ENCODE measurements at regions of chr3 and their contacts with region 1.

Region 1: GRCh38 chr3:185659942-185660921 is 74.1 kb downstream of the SENP2 start:
- DNase-seq: peak; percentile 84
- H3K4me3 ChIP-seq: no peak overlapping the region
- H3K27ac ChIP-seq: peak overlapping the region; percentile 48
- H3K4me1 ChIP-seq: peaks cover 55% of the 10 kb centered on the region
- H3K27me3 ChIP-seq: no peaks in the 10 kb centered on the region
- CTCF ChIP-seq: peak; percentile 98 to 99
- POLR2A ChIP-seq: no peak

Region 2: DNA sequence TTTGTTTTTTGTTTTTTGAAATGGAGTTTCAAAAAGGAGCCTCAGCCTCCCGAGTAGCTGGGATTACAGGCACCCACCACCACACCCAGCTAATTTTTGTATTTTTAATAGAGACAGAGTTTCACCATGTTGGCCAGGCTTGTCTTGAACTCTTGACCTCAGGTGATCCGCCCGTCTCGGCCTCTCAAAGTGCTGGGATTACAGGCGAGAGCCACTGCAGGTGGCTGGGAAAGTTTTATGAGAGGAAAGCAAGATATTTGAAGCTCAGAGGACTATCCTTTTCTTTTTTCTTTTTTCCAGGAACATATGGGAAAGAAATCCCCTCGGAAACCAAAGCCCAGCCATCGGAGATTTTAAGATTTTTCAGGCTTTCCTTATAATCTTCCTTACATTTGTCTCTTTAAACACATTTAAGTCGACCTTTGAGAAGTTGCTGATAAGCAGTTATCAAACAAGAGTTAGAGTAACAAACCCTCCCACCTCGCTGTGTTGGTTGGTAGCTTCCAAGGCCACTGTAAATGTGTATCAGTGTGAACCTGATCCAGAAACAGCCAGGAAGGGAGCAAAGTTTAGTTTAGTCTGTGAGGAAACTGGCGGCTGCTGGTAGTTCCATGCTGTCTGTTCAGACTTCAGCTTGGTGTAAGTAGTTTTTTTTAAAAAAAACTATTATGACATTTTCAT is 331.8 kb before region 1 on chr3:
- CTCF ChIA-PET with region 1: no interaction called
- POLR2A ChIA-PET with region 1: no interaction called
- dilution Hi-C with region 1: no loop called
- intact Hi-C with region 1: no loop called
- DNase-seq: no peak
- H3K4me3 ChIP-seq: no peak overlapping the region
- H3K27ac ChIP-seq: no peak overlapping the region
- H3K4me1 ChIP-seq: peaks cover 3% of the 10 kb centered on the region
- H3K27me3 ChIP-seq: no peaks in the 10 kb centered on the region
- CTCF ChIP-seq: no peak
- POLR2A ChIP-seq: no peak

Region 3: GRCh38 chr3:185645596-185646381 is 14.4 kb before region 1 on chr3:
- CTCF ChIA-PET with region 1: interaction called, 12 read pairs
- POLR2A ChIA-PET with region 1: no interaction called
- dilution Hi-C with region 1: no loop called
- intact Hi-C with region 1: no loop called
- DNase-seq: no peak
- H3K4me3 ChIP-seq: no peak overlapping the region
- H3K27ac ChIP-seq: no peak overlapping the region
- H3K4me1 ChIP-seq: no peaks in the 10 kb centered on the region
- H3K27me3 ChIP-seq: no peaks in the 10 kb centered on the region
- CTCF ChIP-seq: no peak
- POLR2A ChIP-seq: no peak

Region 4: GRCh38 chr3:185702262-185703225 is 42.3 kb after region 1 on chr3:
- CTCF ChIA-PET with region 1: interaction called, 10 read pairs
- POLR2A ChIA-PET with region 1: no interaction called
- dilution Hi-C with region 1: no loop called
- intact Hi-C with region 1: no loop called
- DNase-seq: peak; percentile 62
- H3K4me3 ChIP-seq: peak overlapping the region in 1 of 3 experiments; percentile 16
- H3K27ac ChIP-seq: peak overlapping the region; percentile 49
- H3K4me1 ChIP-seq: peaks cover 41% of the 10 kb centered on the region
- H3K27me3 ChIP-seq: no peaks in the 10 kb centered on the region
- CTCF ChIP-seq: no peak
- POLR2A ChIP-seq: no peak

Region 5: DNA sequence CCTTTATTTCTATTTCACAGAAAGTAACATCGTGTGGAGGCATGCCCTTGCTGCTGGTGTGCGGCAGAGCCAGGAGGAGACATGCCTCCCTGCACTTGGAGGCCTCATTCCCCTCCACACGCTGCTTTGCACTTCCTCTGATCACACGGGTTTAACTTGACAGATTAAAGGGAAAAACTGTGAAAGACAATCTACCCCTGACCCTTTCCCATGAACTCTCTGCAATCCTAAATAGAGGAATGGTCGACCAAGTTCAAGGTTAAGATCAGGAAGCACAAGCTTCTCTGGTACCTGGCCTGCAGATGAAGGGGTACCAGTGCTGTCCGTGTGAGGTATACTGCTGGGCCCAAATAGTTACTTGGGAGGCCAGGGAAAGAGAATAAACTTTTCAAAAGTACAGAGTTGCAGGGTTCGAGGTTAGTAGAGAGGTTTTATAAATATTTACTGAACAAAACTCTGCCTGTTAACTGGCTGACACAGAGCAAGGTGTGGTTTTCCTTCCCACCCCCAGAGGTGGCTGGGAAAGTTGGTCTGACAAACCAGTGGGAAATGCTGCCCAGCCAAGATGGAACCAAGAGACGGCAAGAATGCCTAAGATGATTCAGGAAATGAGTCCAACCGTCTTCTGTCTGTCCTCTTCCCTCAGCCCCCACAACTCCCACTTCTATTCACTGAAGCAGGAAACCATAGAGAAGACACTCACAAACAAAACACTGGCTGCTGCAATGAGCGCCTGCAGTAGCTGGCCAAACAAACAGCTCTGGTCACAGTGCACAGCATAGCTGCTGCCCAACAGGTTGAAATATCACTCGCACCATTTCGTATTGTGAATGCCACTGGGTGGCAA is 85.0 kb after region 1 on chr3:
- CTCF ChIA-PET with region 1: interaction called, 16 read pairs
- POLR2A ChIA-PET with region 1: no interaction called
- dilution Hi-C with region 1: no loop called
- intact Hi-C with region 1: no loop called
- DNase-seq: peak; percentile 81
- H3K4me3 ChIP-seq: no peak overlapping the region
- H3K27ac ChIP-seq: peak overlapping the region; percentile 79
- H3K4me1 ChIP-seq: peaks cover 29% of the 10 kb centered on the region
- H3K27me3 ChIP-seq: no peaks in the 10 kb centered on the region
- CTCF ChIP-seq: no peak
- POLR2A ChIP-seq: peak; percentile 55

Region 6: GRCh38 chr3:185824476-185825378 is 164.5 kb after region 1 on chr3 and contains the start of gene IGF2BP2:
- CTCF ChIA-PET with region 1: interaction called, 46 read pairs
- POLR2A ChIA-PET with region 1: interaction called, 3 read pairs
- dilution Hi-C with region 1: no loop called
- intact Hi-C with region 1: loop called (anchors 1 kb)
- DNase-seq: peak; percentile 84
- H3K4me3 ChIP-seq: peak within 1 kb of the TSS; percentile 87 to 100 (median 98)
- H3K27ac ChIP-seq: peak within 1 kb of the TSS; percentile 84
- H3K4me1 ChIP-seq: peaks cover 32% of the 10 kb centered on the region
- H3K27me3 ChIP-seq: no peaks in the 10 kb centered on the region
- CTCF ChIP-seq: peak in 1 of 2 donors; percentile 11
- POLR2A ChIP-seq: peak; percentile 69
- total RNA-seq, gene IGF2BP2: 122 and 130 TPM in 2 replicates

Region 7: DNA sequence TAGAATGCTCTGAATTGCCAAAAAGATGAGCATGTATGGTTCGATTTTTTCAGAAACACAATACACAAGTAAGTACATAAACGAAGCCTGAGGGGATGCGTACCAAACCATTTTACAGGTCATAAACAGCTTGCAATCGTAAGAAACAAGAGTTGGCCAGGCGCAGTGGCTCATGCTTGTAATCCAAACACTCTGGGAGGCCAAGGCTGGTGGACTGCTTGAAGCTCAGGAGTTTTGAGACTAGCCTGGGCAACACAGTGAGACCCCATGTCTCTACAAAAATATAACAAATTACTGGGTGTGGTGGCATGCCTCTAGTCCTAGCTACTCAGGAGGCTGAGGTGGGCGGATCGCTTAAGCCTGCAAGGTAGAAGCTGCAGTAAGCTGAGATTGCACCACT is 264.1 kb after region 1 on chr3:
- CTCF ChIA-PET with region 1: interaction called, 78 read pairs
- POLR2A ChIA-PET with region 1: no interaction called
- dilution Hi-C with region 1: no loop called
- intact Hi-C with region 1: no loop called
- DNase-seq: no peak
- H3K4me3 ChIP-seq: no peak overlapping the region
- H3K27ac ChIP-seq: no peak overlapping the region
- H3K4me1 ChIP-seq: peaks cover 23% of the 10 kb centered on the region
- H3K27me3 ChIP-seq: no peaks in the 10 kb centered on the region
- CTCF ChIP-seq: no peak
- POLR2A ChIP-seq: no peak

Region 8: DNA sequence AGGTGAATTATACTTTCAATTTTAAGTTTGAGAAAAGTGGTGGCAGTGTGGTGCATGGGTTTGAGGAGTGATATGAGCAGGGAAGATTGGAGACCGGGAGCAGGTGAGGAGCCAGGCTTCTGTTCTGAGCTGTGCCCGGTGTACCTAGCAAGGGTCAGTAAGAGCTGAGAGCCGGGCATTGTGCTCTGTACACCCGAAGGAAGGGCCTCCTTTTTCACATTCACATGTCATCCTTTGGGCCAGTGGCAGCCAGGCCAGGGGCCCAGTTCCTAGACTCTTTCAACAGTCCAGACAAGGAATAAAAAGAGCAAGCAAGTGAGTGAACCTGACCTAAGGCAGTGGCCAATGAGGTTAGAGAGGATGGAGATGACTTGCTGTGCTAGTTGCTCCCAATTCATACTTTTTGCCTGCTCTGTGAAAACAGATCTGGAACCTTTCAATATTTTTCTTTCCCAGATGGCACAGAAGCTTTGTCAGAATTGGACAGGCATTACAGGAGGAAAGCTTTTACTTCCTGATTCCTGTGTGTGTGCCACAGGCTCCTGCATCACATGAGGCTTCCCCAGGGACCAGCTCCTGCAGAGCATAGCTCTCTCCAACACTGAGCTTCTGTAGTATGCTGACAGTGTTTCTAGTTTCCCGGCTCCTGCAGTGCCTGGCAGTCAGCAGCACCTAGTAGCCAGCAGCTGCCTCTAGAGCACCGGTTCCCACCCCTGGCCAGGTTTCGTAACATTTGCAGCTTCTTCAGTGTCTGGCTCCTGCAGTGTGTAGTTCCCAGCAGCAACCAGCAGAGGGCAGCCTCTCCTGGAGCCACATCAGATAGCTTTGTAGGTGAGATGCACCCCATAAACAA is 282.9 kb after region 1 on chr3:
- CTCF ChIA-PET with region 1: interaction called, 68 read pairs
- POLR2A ChIA-PET with region 1: interaction called, 5 read pairs
- dilution Hi-C with region 1: no loop called
- intact Hi-C with region 1: no loop called
- DNase-seq: peak; percentile 66
- H3K4me3 ChIP-seq: no peak overlapping the region
- H3K27ac ChIP-seq: no peak overlapping the region
- H3K4me1 ChIP-seq: no peaks in the 10 kb centered on the region
- H3K27me3 ChIP-seq: peaks cover 6 to 13% of the 10 kb centered on the region in 2 experiments
- CTCF ChIP-seq: peak; percentile 97 to 99
- POLR2A ChIP-seq: no peak

Region 9: GRCh38 chr3:186108941-186109865 is 449.0 kb after region 1 on chr3 and contains the start of gene ETV5:
- CTCF ChIA-PET with region 1: no interaction called
- POLR2A ChIA-PET with region 1: no interaction called
- dilution Hi-C with region 1: no loop called
- intact Hi-C with region 1: no loop called
- DNase-seq: peak; percentile 100
- H3K4me3 ChIP-seq: peak within 1 kb of the TSS; percentile 67 to 95 (median 87)
- H3K27ac ChIP-seq: peak within 1 kb of the TSS; percentile 88
- H3K4me1 ChIP-seq: peaks cover 18% of the 10 kb centered on the region
- H3K27me3 ChIP-seq: peaks cover 11 to 13% of the 10 kb centered on the region in 2 experiments
- CTCF ChIP-seq: no peak
- POLR2A ChIP-seq: peak; percentile 77
- total RNA-seq, gene ETV5: 40.9 and 43.4 TPM in 2 replicates